ENCODE measurements at regions of chr2 and their contacts with region 1.

Region 1: GRCh38 chr2:224284134-224284946 is 117.6 kb downstream of the FAM124B start:
- DNase-seq: no peak
- ATAC-seq: no peak
- H3K4me3 Mint-ChIP-seq: no peak overlapping the region
- H3K27ac Mint-ChIP-seq: no peak overlapping the region
- H3K4me1 Mint-ChIP-seq: no peaks in the 10 kb centered on the region
- H3K27me3 Mint-ChIP-seq: peaks cover 23% of the 10 kb centered on the region
- CTCF ChIP-seq: peak; percentile 58

Region 2: GRCh38 chr2:223459328-223459939 is 824.9 kb before region 1 on chr2:
- CTCF ChIA-PET with region 1: interaction called, 4 read pairs
- POLR2A ChIA-PET with region 1: no interaction called
- intact Hi-C with region 1: loop called (anchors 2 kb)
- DNase-seq: no peak
- ATAC-seq: no peak
- H3K4me3 Mint-ChIP-seq: no peak overlapping the region
- H3K27ac Mint-ChIP-seq: no peak overlapping the region
- H3K4me1 Mint-ChIP-seq: no peaks in the 10 kb centered on the region
- H3K27me3 Mint-ChIP-seq: no peaks in the 10 kb centered on the region
- CTCF ChIP-seq: no peak

Region 3: GRCh38 chr2:223779877-223780276 is 504.5 kb before region 1 on chr2:
- CTCF ChIA-PET with region 1: interaction called, 4 read pairs
- POLR2A ChIA-PET with region 1: no interaction called
- intact Hi-C with region 1: loop called (anchors 1 kb)
- DNase-seq: peak; percentile 21
- ATAC-seq: peak; percentile 90
- H3K4me3 Mint-ChIP-seq: no peak overlapping the region
- H3K27ac Mint-ChIP-seq: peak overlapping the region; percentile 41
- H3K4me1 Mint-ChIP-seq: peaks cover 21% of the 10 kb centered on the region
- H3K27me3 Mint-ChIP-seq: no peaks in the 10 kb centered on the region
- CTCF ChIP-seq: no peak

Region 4: DNA sequence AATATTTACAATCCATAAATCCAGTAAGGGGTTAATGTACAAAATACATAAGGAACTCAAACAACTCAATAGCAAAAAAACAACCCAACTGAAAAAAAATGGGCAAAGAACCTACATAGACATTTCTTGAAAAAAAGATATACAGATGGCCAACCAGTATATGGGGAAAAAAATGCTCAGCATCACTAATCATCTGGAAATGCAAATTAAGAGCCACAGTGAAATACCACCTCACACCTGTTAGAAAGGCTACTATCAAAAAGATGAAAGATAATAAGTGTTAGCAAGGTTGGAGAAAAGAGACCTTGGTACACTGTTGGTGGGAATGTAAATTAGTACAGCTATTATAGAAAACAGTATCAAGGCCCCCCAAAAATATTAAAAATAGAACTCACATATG is 461.5 kb before region 1 on chr2:
- CTCF ChIA-PET with region 1: no interaction called
- POLR2A ChIA-PET with region 1: no interaction called
- intact Hi-C with region 1: no loop called
- DNase-seq: no peak
- ATAC-seq: peak; percentile 74
- H3K4me3 Mint-ChIP-seq: peak overlapping the region; percentile 63
- H3K27ac Mint-ChIP-seq: peak overlapping the region; percentile 26
- H3K4me1 Mint-ChIP-seq: peaks cover 71% of the 10 kb centered on the region
- H3K27me3 Mint-ChIP-seq: no peaks in the 10 kb centered on the region
- CTCF ChIP-seq: no peak

Region 5: DNA sequence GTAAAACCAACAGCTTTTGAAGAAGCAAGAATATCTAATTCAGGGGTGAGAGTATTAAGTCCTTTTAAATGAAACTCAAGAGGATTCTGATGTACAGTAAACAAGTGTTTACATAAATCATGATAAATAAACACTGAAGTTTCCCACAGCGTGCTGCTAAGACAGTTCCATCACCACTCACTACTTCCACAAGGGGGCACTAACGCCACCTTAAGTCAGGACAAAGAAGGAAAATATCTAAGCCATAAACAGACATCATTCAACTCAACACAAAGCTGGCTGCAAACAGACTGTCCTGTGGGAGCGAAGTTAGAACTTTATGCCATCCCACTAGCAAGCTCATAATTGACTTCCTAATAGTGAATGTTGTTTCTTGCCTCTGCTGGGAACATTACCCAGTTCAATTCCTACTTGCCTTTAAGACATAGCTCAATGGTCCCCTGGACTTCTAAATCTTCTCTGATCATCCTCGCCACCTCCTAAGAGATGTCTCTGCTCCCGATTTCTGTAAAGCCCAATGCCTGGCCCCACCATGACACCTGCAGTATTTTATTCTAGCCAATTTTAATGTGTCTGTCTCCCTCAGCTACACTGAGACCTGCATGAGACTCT is 290.6 kb before region 1 on chr2:
- CTCF ChIA-PET with region 1: interaction called, 210 read pairs
- POLR2A ChIA-PET with region 1: interaction called, 4 read pairs
- intact Hi-C with region 1: loop called (anchors 1 kb)
- DNase-seq: no peak
- ATAC-seq: peak; percentile 67
- H3K4me3 Mint-ChIP-seq: no peak overlapping the region
- H3K27ac Mint-ChIP-seq: no peak overlapping the region
- H3K4me1 Mint-ChIP-seq: no peaks in the 10 kb centered on the region
- H3K27me3 Mint-ChIP-seq: no peaks in the 10 kb centered on the region
- CTCF ChIP-seq: no peak

Region 6: GRCh38 chr2:224008702-224009261 is 275.6 kb before region 1 on chr2:
- CTCF ChIA-PET with region 1: no interaction called
- POLR2A ChIA-PET with region 1: no interaction called
- intact Hi-C with region 1: no loop called
- DNase-seq: no peak
- ATAC-seq: no peak
- H3K4me3 Mint-ChIP-seq: no peak overlapping the region
- H3K27ac Mint-ChIP-seq: no peak overlapping the region
- H3K4me1 Mint-ChIP-seq: no peaks in the 10 kb centered on the region
- H3K27me3 Mint-ChIP-seq: peaks cover 5% of the 10 kb centered on the region
- CTCF ChIP-seq: no peak

Region 7: GRCh38 chr2:224869601-224870233 is 585.4 kb after region 1 on chr2:
- CTCF ChIA-PET with region 1: no interaction called
- POLR2A ChIA-PET with region 1: no interaction called
- intact Hi-C with region 1: no loop called
- DNase-seq: no peak
- ATAC-seq: no peak
- H3K4me3 Mint-ChIP-seq: no peak overlapping the region
- H3K27ac Mint-ChIP-seq: no peak overlapping the region
- H3K4me1 Mint-ChIP-seq: peaks cover 4% of the 10 kb centered on the region
- H3K27me3 Mint-ChIP-seq: no peaks in the 10 kb centered on the region
- CTCF ChIP-seq: no peak